Aorta (tissue), 5 donors: ENCODE measurements at regions of chr11 and their contacts with region 1.

Region 1: GRCh38 chr11:120172054-120172911 is 34.4 kb upstream of the TRIM29 start:
- DNase-seq: peak; percentile 75 to 79
- ATAC-seq: no peak
- H3K4me3 ChIP-seq: no peak overlapping the region
- H3K27ac ChIP-seq: no peak overlapping the region
- H3K4me1 ChIP-seq: no peaks in the 10 kb centered on the region
- H3K27me3 ChIP-seq: no peaks in the 10 kb centered on the region

Region 2: GRCh38 chr11:120043328-120043945 is 128.8 kb before region 1 on chr11:
- intact Hi-C with region 1: no loop called
- DNase-seq: no peak
- ATAC-seq: no peak
- H3K4me3 ChIP-seq: no peak overlapping the region
- H3K27ac ChIP-seq: no peak overlapping the region
- H3K4me1 ChIP-seq: no peaks in the 10 kb centered on the region
- H3K27me3 ChIP-seq: no peaks in the 10 kb centered on the region

Region 3: DNA sequence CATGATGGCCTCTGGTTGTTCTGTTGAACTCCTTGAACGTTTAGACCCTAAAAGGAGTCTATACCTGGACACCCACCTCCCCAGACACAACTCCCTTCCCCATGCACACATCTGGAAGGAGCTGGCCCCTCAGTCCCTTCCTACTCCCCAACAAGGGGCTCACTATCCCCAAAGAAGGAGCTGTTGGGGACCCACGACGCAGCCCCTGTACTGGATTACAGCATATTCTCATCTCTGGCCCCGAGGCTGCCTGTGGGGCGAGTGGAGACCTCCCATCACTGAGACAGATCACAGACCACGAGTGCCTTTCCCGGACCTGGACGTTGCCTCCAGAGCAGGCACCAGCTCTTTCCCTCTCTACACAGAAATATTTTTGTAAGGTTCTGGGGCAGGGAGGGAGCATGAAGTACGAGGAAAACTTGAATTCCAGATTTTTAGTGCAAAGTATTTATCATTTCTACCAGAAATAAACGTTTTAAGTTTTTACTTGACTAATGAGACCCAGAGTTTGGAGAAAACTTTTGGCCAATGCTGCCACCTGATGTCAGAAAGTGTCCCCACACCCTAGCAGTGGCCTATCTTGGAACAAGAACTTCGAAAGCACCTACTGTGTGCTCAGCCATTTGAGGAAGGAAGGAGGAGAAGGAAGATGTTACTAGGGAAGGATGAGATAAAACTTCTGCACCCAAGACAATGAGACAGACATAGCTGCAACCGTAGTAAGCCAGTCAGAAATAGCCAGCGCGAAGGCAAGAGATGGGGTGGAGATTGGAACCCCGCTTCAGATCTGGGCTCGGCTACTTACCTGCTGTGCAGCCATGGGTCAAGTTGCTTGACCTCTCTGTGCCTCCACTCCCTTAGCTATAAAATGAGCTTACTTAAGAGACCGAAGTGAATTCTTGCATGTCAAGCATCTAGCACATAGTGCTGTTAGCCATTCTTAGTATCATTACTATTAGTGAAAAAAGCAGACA is 57.5 kb after region 1 on chr11:
- intact Hi-C with region 1: loop called (anchors 1 to 5 kb)
- DNase-seq: no peak
- ATAC-seq: no peak
- H3K4me3 ChIP-seq: no peak overlapping the region
- H3K27ac ChIP-seq: no peak overlapping the region
- H3K4me1 ChIP-seq: no peaks in the 10 kb centered on the region
- H3K27me3 ChIP-seq: no peaks in the 10 kb centered on the region

Region 4: GRCh38 chr11:120303004-120303637 is 130.8 kb after region 1 on chr11:
- intact Hi-C with region 1: loop called (anchors 2 to 5 kb)
- DNase-seq: peak in 1 of 2 donors; percentile 58
- ATAC-seq: peak; percentile 63
- H3K4me3 ChIP-seq: no peak overlapping the region
- H3K27ac ChIP-seq: no peak overlapping the region
- H3K4me1 ChIP-seq: no peaks in the 10 kb centered on the region
- H3K27me3 ChIP-seq: no peaks in the 10 kb centered on the region

Region 5: GRCh38 chr11:120547811-120548681 is 375.8 kb after region 1 on chr11:
- intact Hi-C with region 1: no loop called
- DNase-seq: peak; percentile 93 to 94
- ATAC-seq: peak; percentile 83
- H3K4me3 ChIP-seq: no peak overlapping the region
- H3K27ac ChIP-seq: peak overlapping the region in 1 of 2 donors; percentile 45
- H3K4me1 ChIP-seq: no peaks in the 10 kb centered on the region
- H3K27me3 ChIP-seq: no peaks in the 10 kb centered on the region